Cardiac septum (tissue), 1 donor: ENCODE measurements at regions of chr10 and their contacts with region 1.

Region 1: GRCh38 chr10:22003079-22003913 is at the start of gene DNAJC1:
- DNase-seq: peak; percentile 99
- total RNA-seq, gene DNAJC1: 12.9 TPM

Region 2: DNA sequence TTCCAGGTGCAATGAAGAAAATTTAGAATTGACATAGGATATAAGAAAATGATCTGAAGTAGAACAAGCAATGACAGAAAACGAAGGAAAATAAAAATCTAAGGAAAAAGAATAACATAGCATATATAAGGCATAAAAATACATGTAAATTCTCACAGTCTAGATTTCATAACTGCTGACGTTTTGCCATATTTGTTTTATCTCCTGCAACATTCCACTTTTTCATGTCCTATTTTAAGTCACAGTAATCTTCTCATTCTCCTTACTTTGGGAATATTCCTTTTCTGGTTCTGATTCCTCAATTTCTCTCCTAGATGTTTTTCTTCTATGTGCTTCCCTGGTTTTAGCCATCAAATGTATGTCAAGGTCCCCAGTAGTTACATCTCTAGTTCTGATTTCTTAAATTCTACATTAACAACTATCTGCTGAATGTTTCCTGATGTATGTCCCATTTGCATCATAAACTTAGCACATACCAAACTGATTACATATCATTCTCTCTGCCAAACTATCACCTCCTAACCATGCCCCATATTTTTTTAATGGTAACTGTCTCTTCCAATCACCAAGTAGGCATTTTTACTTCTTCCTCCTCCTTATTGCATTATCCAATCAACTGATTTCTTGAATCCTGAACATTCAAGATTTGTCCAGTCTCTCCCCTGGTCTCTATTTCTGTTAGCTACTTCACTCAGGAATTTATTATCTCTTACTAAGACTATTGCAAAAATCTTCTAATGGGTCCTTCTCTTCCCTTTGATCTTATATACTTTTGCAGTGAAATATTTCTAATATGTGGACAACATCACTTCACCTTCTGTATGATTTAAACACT is 171.1 kb before region 1 on chr10:
- intact Hi-C with region 1: no loop called
- DNase-seq: no peak

Region 3: GRCh38 chr10:22228943-22229801 is 225.9 kb after region 1 on chr10:
- intact Hi-C with region 1: loop called (anchors 10 kb)
- DNase-seq: peak; percentile 88

Region 4: GRCh38 chr10:22251751-22252223 is 248.5 kb after region 1 on chr10:
- intact Hi-C with region 1: loop called (anchors 2 kb)
- DNase-seq: peak; percentile 88

Region 5: GRCh38 chr10:22316285-22317120 is 313.2 kb after region 1 on chr10 and contains the start of gene COMMD3:
- intact Hi-C with region 1: loop called (anchors 5 kb)
- DNase-seq: peak; percentile 96
- total RNA-seq, gene COMMD3: 71.6 TPM

Region 6: DNA sequence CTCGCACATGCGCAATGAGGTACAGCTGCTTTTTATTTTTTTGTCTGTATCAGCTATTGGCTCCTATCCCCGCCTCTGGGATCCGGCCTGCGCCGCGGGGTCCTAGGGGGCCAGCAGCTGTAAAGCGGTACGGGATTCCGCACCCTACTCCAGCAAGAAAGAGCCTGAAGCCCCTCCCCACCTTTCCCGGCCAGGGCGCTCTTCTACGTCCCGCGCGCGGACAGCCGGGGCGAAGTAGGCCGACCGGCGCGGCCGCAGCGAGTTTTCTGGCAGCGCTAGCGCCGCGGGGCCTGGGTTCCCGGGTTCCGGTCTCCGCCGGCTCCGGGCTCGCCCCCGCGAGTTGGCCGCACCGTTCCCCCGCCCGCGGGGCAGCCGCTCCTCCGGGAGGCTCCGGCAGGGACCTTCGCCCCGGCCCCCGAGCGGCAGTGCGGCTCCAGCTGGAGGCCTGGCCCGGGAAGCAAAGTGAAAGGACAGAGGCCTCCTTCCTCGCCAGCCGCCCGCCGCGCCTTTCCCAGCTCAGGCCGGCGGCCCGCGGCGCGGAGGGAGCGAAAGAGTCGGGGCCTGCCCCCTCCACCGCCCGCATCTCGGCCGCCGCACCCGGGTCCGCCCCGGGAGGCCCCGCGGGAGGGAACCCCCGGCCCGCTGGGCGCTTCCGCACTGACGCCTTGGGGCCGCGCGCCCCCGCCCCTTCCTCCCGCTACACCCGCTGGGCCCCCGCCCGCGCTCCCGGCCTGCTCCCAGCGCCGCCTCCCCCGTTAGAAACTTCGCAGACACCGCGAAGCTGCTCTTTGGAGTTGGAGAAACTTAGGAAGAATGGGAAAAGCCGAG is 337.3 kb after region 1 on chr10:
- intact Hi-C with region 1: loop called (anchors 5 kb)
- DNase-seq: peak; percentile 87

Region 7: GRCh38 chr10:22475651-22476600 is 472.6 kb after region 1 on chr10:
- intact Hi-C with region 1: no loop called
- DNase-seq: no peak

Region 8: DNA sequence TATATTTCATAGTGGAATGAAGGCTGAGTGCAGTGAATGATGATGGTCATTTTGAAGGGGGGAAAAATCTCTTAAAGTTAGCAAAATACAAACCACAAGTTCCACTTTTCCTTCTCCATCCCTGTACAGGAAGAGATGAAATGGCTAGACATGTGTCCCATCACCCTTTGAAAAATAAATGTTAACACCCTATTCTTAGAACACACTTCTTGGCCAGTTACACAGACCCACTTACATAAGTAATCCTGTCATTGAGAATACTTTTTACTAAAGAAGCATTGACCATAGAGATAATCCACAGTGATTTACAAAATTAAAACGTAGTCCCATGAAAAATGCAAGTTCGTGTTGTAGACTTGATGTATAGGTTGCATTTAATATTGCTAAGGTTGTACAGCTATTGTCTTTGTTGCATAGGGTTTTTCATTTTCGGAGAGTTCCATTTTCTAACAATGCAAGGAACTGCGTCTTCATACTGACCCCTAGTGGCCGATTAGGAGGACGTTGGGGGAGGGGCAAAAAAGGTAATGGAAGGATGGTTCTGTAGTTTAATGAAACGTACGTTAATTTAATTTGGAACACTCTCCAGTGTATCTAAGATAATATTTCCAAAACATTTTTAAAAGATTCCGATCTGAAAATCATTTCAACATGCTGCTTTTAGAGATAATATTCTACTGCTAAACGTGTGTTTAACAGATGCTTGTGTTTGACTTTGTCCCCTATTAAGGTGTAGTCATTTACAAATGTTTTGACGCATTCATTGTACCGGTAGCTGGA is 985.5 kb after region 1 on chr10:
- intact Hi-C with region 1: loop called (anchors 5 kb)
- DNase-seq: no peak

Region 9: DNA sequence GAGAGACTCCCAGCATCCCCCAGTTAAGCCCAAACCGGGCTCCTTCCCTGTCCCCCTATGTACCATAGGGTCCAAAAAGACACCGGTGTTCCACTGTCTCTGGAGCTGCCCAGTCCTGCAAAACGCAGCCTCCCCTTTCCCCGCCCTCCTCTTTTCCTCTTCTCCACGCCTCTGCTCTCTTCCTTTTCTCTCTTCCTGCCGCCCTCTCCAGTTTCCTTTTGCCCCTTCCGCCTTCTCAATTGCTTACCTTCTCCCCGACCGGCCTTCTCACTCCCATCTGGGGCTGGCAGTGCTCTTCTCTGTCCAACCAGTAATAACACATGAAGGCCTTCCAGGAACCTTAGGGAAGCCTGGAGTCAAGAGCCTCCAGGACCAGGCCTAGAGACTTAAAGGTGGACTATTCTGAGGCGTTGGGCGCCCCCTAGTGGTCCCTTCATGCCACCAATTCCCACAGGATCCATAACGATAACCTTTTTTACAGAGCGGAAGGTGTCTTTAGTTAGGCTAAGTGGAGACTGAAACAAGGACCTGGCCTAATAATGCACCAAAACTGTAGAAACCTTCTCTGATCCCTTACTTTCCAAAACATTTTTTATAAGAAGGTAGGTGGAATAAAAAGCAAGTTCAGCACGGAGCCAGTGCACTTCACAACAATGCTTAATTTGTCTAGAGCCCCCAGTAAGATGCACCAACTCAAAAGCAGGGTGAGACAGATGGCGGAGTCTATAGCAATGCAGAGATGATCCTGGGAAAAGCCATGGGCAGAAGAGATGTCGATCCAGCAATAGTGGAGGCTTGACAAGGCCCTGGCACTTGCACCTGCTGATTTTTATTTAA is 1064.9 kb after region 1 on chr10:
- intact Hi-C with region 1: loop called (anchors 10 kb)
- DNase-seq: peak; percentile 79